AG04450 (cell line): ENCODE measurements at regions of chr1 and their contacts with region 1.

Region 1: GRCh38 chr1:113042285-113043143 is 30.5 kb upstream of the LRIG2 start:
- DNase-seq: peak; percentile 46
- H3K4me3 ChIP-seq: no peak overlapping the region
- H3K27ac ChIP-seq: peak overlapping the region; percentile 86
- H3K27me3 ChIP-seq: no peaks in the 10 kb centered on the region
- CTCF ChIP-seq: peak; percentile 61

Region 2: DNA sequence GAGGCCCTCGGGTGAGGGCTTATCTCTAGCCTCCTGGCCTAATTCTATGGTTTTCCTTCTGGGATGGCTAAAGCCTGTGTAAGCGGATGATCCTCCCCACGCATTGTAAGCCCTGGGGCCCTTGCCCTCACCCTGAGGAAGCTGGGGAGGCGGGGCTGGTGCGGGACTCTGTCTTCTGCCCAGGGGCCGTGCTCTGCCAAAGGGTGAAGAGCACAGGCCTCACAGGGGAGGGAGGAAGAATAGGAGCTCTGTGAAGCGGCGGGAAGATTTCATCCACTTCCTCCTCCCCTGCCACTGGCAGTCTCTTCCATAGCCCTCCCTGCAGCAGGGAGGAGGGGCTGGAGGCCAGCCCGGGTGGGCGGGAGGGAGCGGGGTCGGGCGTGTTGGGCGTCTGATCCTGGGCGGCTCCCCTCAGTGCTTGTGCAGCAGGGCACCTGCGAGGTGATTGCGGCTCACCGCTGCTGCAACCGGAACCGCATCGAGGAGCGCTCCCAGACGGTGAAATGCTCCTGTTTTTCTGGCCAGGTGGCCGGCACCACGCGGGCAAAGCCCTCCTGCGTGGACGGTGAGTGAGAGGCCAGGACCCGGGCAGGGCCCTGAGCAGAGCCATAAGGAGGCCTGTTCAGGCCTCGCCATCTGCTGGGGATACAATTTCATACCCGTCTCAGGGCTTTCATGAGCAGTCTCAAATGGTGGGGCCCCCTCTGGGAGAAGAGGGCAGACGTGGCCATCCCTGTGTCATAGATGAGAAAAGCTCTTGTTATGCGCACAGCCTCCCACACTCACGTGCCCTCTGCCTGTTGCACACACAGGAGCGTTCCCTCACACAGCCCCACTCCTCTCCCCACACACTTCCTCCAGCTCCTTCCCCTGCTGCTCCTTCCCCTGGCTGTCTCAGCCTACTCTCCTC is 319.7 kb before region 1 on chr1:
- CTCF ChIA-PET with region 1: interaction called, 79 read pairs
- POLR2A ChIA-PET with region 1: no interaction called
- DNase-seq: no peak
- H3K4me3 ChIP-seq: no peak overlapping the region
- H3K27ac ChIP-seq: peak overlapping the region; percentile 31
- H3K27me3 ChIP-seq: no peaks in the 10 kb centered on the region
- CTCF ChIP-seq: 0 out of 2 replicates have a peak, but pooled peaks have one; percentile 11

Region 3: DNA sequence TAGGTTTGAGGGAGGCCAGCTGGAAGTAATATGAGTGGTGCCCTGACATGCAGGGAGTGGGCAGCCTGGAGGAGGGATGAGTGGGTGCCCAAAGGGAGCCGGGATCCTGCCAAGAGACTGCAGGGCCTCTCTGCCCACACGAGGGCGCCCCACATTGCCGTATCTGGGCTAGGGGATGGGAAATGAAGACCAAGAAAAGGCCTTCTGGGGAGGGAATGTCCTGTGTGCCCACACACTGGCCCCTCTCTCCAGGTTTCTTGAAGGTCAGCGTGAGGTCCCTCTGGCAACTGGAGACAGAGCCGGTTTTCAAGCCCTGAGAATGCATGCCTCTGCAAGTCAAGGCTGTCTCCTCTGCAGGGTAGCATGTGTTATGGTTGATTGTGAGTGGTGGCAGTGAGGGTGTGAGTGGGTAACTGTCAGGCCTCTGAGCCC is 233.2 kb before region 1 on chr1:
- CTCF ChIA-PET with region 1: interaction called, 35 read pairs
- POLR2A ChIA-PET with region 1: no interaction called
- DNase-seq: peak; percentile 18
- H3K4me3 ChIP-seq: no peak overlapping the region
- H3K27ac ChIP-seq: no peak overlapping the region
- H3K27me3 ChIP-seq: peaks cover 12% of the 10 kb centered on the region
- CTCF ChIP-seq: peak; percentile 94

Region 4: GRCh38 chr1:112836642-112837041 is 205.9 kb before region 1 on chr1:
- CTCF ChIA-PET with region 1: interaction called, 10 read pairs
- POLR2A ChIA-PET with region 1: no interaction called
- DNase-seq: no peak
- H3K4me3 ChIP-seq: no peak overlapping the region
- H3K27ac ChIP-seq: no peak overlapping the region
- H3K27me3 ChIP-seq: peaks cover 3% of the 10 kb centered on the region
- CTCF ChIP-seq: no peak

Region 5: DNA sequence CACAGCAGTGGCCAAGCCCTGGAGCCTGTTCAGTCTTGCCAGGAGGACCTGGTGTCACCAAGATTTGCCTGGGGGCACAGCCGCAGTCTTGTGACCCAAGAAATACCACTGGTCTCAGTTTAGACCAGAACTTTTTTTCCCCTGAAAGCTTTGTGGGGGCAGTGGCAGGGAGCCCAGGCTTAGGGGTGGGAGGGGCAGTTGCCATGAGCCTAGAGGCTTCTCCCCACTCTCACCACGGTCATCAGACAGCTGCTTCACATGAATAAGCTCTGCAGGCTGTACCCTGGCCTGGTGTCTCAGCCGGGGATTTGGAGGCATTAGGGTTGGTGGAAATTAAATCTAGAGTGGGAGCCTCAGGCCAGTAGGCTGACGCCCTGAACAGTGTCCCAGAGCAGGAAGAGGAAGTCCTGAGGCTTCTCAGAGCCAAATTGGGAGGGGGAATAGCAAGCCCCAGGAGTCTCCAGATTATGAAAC is 160.2 kb before region 1 on chr1:
- CTCF ChIA-PET with region 1: interaction called, 129 read pairs
- POLR2A ChIA-PET with region 1: interaction called, 11 read pairs
- DNase-seq: no peak
- H3K4me3 ChIP-seq: no peak overlapping the region
- H3K27ac ChIP-seq: no peak overlapping the region
- H3K27me3 ChIP-seq: no peaks in the 10 kb centered on the region
- CTCF ChIP-seq: no peak

Region 6: DNA sequence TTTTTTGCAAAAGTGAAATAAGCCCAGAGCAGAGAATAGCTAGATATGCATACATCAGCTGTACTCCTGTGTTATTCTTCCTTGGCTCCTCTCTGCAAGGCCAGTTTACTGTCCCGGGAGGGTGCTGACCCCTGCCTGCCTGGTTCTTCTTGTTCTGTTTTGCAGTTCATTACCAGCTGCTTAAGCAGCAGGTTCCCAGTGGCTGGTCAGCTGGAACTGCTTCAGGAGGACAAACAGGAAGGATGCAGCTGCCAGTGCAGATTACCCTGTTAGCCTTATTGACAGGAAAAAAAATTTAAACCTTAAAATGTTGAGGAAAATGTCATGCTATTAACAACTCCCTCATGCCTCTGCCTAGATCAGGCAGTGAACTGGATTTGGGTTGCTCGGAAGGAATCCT is 14.5 kb after region 1 on chr1:
- CTCF ChIA-PET with region 1: interaction called, 13 read pairs
- POLR2A ChIA-PET with region 1: interaction called, 3 read pairs
- DNase-seq: no peak
- H3K4me3 ChIP-seq: no peak overlapping the region
- H3K27ac ChIP-seq: no peak overlapping the region
- H3K27me3 ChIP-seq: no peaks in the 10 kb centered on the region
- CTCF ChIP-seq: no peak